ENCODE measurements at regions of chr2 and their contacts with region 1.

Region 1: DNA sequence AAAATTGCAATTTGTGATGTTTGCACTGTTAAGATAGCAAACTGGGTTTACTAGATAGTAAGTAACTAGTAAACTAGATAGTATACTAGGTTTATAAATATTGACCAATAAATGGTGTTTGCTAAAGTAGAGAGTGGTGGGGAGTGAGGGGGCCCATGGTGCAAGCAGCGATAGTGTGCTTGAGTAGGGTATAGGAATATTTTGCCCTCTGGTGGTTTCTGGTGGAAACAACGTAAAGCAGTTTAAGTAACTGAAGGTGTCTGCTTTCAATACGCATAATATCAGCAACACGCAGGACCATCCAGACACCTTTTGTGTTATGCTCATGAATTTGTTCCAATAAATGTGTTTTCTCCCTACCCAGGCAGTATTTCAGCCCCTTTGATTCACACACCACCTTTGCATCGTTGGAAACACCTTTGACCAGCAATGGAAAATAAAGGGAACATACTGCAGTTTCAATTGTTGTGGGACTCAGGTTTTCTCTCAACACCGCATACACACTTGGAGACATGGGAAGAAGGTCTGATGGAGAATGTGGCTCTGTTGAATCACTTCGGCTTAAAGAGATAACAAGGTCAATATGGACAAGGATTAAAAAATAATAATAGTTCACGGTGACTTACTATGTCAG is 16.7 kb upstream of the STAT1 start:
- DNase-seq: no peak
- ATAC-seq: peak; percentile 89
- H3K4me3 Mint-ChIP-seq: no peak overlapping the region
- H3K27ac Mint-ChIP-seq: peak overlapping the region; percentile 41
- H3K4me1 Mint-ChIP-seq: peaks cover 51% of the 10 kb centered on the region
- H3K27me3 Mint-ChIP-seq: no peaks in the 10 kb centered on the region

Region 2: DNA sequence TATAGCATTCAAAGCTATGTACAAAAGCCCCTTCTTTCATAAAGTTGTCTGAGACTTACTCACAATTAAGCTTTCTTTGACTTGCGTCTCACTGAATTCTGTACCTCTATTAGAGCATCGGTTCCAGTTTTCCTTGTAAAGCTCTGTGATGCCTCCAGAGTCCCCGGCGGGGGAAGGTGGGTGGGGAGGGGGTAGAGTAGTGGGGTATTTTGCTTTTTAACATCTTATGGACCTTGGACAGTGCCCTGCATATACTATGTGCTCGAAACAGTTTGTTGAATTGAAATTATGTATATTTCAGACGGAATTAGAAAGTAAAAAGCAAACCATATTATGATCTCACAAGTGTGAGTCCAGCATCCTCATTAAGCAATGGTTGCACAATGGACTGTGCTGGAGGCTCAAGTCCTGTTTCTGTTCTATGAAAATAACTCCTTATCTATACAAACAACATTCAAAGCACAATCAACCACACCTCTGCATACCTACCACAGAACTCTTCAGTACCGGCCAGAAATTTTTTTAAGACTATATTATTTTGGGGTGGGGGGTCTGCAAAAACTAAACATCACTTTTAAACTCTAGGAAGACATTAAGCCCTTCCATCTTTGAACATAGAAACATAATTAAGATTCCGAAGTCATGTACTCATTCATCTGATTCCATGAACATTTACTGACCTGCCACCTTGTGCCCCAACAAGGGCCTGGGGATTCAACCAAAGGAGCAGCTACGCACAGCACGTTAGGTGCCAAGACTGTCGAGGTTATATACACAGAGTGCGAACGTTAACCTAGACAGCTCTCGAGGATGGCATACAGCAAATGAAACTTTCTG is 17.6 kb before region 1 on chr2:
- CTCF ChIA-PET with region 1: interaction called, 12 read pairs
- DNase-seq: no peak
- ATAC-seq: peak; percentile 3
- H3K4me3 Mint-ChIP-seq: no peak overlapping the region
- H3K27ac Mint-ChIP-seq: no peak overlapping the region
- H3K4me1 Mint-ChIP-seq: peaks cover 38% of the 10 kb centered on the region
- H3K27me3 Mint-ChIP-seq: no peaks in the 10 kb centered on the region

Region 3: DNA sequence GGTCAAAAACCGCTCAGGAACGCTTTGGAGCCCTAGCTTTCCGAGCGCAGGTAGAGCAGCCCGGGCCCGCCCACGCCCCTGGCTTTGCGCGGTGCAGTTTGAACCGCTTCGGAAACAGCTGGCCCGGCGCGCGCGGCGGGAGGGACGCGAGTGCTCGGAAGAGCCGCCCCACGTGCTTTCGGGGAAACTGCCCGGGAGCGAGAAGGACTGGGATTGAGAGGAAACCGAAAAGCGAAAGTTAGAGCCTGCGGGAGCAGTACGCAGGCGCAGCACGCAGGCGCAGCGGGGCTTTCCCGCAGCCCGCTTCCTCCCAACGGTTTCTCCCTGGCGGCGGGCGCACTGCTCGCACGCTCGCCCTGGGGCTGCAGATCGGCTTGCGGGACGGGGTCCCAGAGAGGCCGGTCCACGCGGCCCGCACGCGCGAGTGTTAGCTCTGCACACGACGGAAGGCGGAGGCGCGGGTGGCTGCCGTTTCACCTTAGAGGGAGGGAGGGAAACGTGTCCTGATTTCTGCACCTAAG is 10.4 kb before region 1 on chr2:
- CTCF ChIA-PET with region 1: interaction called, 15 read pairs
- DNase-seq: peak; percentile 95
- ATAC-seq: peak; percentile 76
- H3K4me3 Mint-ChIP-seq: no peak overlapping the region
- H3K27ac Mint-ChIP-seq: no peak overlapping the region
- H3K4me1 Mint-ChIP-seq: peaks cover 38% of the 10 kb centered on the region
- H3K27me3 Mint-ChIP-seq: peaks cover 2% of the 10 kb centered on the region

Region 4: GRCh38 chr2:191066197-191066918 is 35.7 kb after region 1 on chr2:
- CTCF ChIA-PET with region 1: no interaction called
- DNase-seq: no peak
- ATAC-seq: peak; percentile 45
- H3K4me3 Mint-ChIP-seq: peak overlapping the region; percentile 95
- H3K27ac Mint-ChIP-seq: peak overlapping the region; percentile 90
- H3K4me1 Mint-ChIP-seq: peaks cover 76% of the 10 kb centered on the region
- H3K27me3 Mint-ChIP-seq: no peaks in the 10 kb centered on the region

Region 5: DNA sequence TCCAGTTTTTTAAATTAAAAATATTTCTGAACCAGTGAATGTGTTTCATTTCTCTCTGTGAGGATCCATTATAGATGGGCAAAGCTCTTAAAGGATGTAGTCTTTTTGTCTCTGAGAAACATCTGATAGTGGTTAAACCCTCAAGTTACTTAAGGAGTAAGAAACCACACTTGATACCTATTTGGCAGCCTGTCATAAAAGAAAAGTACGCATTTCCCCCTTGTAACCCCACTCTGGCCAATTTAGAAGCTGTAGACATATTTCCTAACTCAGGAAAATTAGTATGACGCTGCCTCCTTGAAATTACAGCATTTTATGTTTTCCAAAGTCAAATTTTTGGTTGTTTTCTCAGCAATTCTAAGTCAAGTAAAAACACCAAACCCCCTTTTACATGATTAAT is 118.2 kb after region 1 on chr2:
- CTCF ChIA-PET with region 1: no interaction called
- DNase-seq: no peak
- ATAC-seq: peak; percentile 20
- H3K4me3 Mint-ChIP-seq: peak overlapping the region; percentile 94
- H3K27ac Mint-ChIP-seq: peak overlapping the region; percentile 95
- H3K4me1 Mint-ChIP-seq: peaks cover 60% of the 10 kb centered on the region
- H3K27me3 Mint-ChIP-seq: no peaks in the 10 kb centered on the region

Region 6: DNA sequence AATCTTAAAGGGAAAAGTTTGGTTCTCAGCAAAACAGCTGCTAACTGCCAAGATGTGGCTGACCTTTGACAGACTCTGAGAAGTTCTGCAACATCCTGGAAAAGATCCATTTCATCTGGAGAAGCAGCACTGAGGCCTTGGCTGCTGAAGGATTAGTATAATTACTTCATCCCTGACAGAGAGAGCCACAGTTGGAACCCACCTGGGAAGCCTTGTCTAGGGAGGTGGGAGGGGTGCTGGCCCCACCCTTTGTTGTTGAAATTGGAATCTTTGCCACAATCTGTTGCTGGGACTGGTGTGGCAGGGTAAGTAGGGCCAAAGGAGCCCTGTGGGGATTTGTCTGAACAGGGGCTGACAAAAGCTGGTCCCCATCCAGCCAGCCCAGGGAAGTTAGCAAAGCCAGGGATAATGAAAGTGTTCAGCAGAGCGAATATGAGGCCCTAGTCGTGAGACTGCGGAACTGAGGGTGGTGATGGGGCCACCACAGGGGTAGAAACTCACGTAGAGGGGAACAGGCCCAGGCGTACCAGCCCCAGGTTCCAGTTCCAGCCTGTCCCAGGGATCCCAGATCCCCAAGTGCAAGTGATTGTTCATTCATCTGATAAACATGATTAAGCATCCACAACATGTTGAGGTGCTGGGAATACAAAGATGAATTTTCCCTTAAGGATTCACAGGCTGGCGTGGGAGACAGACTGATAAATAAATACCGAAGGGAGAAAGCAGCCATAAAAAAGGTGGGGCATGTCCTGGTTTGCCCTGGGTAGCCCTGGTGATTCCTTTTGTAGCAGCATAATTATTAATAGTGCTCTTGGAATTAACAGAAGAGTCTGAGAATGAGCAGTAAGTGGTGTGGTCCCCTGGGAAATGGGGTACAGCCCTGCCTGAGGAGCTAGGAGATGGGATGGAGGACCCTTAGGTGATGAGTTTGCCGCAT is 274.6 kb after region 1 on chr2:
- CTCF ChIA-PET with region 1: no interaction called
- DNase-seq: no peak
- ATAC-seq: no peak
- H3K4me3 Mint-ChIP-seq: no peak overlapping the region
- H3K27ac Mint-ChIP-seq: no peak overlapping the region
- H3K4me1 Mint-ChIP-seq: no peaks in the 10 kb centered on the region
- H3K27me3 Mint-ChIP-seq: peaks cover 7% of the 10 kb centered on the region